Naive thymus-derived CD4-positive, alpha-beta T cell (primary cell): ENCODE measurements at regions of chr3 and their contacts with region 1.

Region 1: GRCh38 chr3:177057768-177058167 is 139.5 kb downstream of the TBL1XR1 start:
- DNase-seq: peak in 7 of 9 donors; percentile 16 to 40 (median 22)
- ATAC-seq: peak; percentile 84
- H3K4me3 ChIP-seq: peak overlapping the region; percentile 23
- H3K4me3 Mint-ChIP-seq: no peak overlapping the region
- H3K27ac ChIP-seq: no peak overlapping the region
- H3K27ac Mint-ChIP-seq: no peak overlapping the region
- H3K4me1 ChIP-seq: peaks cover 10 to 20% of the 10 kb centered on the region in 2 donors
- H3K4me1 Mint-ChIP-seq: peaks cover 5 to 43% (median 31%) of the 10 kb centered on the region in 7 donors
- H3K27me3 ChIP-seq: no peaks in the 10 kb centered on the region
- H3K27me3 Mint-ChIP-seq: no peaks in the 10 kb centered on the region

Region 2: DNA sequence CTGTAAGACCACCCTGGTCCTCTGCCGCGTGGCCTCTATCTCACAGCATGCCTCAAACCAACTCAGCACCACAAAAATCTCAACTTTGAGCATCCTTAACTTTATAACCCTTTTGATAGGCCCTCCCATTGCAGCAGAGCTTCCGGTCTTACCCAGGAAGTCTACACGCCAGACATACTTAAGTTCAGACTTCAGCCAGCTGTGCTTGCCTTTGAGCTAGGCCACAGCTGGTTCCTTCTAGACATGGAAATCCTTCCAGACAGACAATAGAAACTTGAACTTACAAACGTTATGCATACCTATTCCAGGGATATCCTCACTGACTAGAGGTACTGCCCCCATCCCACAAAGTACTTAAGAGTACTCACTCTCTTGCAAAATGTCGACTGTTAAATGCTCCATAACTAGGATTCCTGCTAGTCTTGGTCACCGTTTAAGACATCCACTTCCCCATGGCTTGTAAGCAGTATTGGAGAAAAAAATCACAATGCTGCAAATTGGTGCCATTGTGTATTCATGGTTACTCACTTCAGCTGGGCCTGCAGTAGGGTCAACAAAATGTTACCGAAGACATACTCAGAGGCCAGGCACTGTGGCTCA is 44.0 kb before region 1 on chr3:
- CTCF ChIA-PET with region 1: no interaction called
- POLR2A ChIA-PET with region 1: no interaction called
- intact Hi-C with region 1: no loop called
- DNase-seq: no peak
- ATAC-seq: no peak
- H3K4me3 ChIP-seq: no peak overlapping the region
- H3K4me3 Mint-ChIP-seq: no peak overlapping the region
- H3K27ac ChIP-seq: no peak overlapping the region
- H3K27ac Mint-ChIP-seq: peak overlapping the region in 1 of 9 donors; percentile 51
- H3K4me1 ChIP-seq: no peaks in the 10 kb centered on the region
- H3K4me1 Mint-ChIP-seq: no peaks in the 10 kb centered on the region
- H3K27me3 ChIP-seq: no peaks in the 10 kb centered on the region
- H3K27me3 Mint-ChIP-seq: no peaks in the 10 kb centered on the region

Region 3: DNA sequence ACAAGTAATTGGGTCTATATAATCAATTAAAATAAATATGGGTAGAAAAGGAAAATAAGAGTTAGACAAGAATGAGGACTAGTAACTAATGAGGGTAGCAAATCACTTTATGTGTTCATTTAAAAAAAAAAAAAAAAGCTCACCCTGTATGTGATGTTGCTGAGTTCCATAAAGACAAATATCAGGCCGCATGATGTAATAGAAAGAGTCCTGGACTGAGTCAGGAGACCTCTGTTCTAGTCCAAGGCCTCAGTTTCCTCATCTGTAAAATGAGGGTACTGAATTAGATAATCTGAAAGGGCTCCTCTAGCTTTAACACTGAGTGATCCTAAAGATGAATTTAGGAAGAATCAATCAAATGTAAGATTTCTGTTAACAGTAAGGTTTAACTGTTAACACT is 21.9 kb after region 1 on chr3:
- CTCF ChIA-PET with region 1: no interaction called
- POLR2A ChIA-PET with region 1: no interaction called
- intact Hi-C with region 1: loop called in 1 of 2 experiments (anchors 2 kb)
- DNase-seq: no peak
- ATAC-seq: no peak
- H3K4me3 ChIP-seq: no peak overlapping the region
- H3K4me3 Mint-ChIP-seq: no peak overlapping the region
- H3K27ac ChIP-seq: no peak overlapping the region
- H3K27ac Mint-ChIP-seq: peak overlapping the region in 1 of 9 donors; percentile 42
- H3K4me1 ChIP-seq: peaks cover 0 to 3% of the 10 kb centered on the region in 2 donors
- H3K4me1 Mint-ChIP-seq: peaks cover 14 to 70% (median 49%) of the 10 kb centered on the region in 7 donors
- H3K27me3 ChIP-seq: no peaks in the 10 kb centered on the region
- H3K27me3 Mint-ChIP-seq: no peaks in the 10 kb centered on the region

Region 4: GRCh38 chr3:177109688-177110330 is 52.0 kb after region 1 on chr3:
- CTCF ChIA-PET with region 1: no interaction called
- POLR2A ChIA-PET with region 1: interaction called, 4 read pairs
- intact Hi-C with region 1: loop called in 1 of 2 experiments (anchors 5 kb)
- DNase-seq: peak in 7 of 9 donors; percentile 17 to 70 (median 60)
- ATAC-seq: peak; percentile 92
- H3K4me3 ChIP-seq: no peak overlapping the region
- H3K4me3 Mint-ChIP-seq: peak overlapping the region; percentile 7 to 79 (median 60)
- H3K27ac ChIP-seq: peak overlapping the region; percentile 60
- H3K27ac Mint-ChIP-seq: peak overlapping the region in 8 of 9 donors; percentile 84 to 95 (median 89)
- H3K4me1 ChIP-seq: peaks cover 16 to 36% of the 10 kb centered on the region in 2 donors
- H3K4me1 Mint-ChIP-seq: peaks cover 47 to 89% (median 77%) of the 10 kb centered on the region in 7 donors
- H3K27me3 ChIP-seq: no peaks in the 10 kb centered on the region
- H3K27me3 Mint-ChIP-seq: no peaks in the 10 kb centered on the region

Region 5: GRCh38 chr3:177144923-177145780 is 87.4 kb after region 1 on chr3:
- CTCF ChIA-PET with region 1: no interaction called
- POLR2A ChIA-PET with region 1: interaction called, 4 read pairs
- intact Hi-C with region 1: loop called in 1 of 2 experiments (anchors 5 kb)
- DNase-seq: peak in 7 of 9 donors; percentile 25 to 67 (median 41)
- ATAC-seq: peak; percentile 91
- H3K4me3 ChIP-seq: peak overlapping the region; percentile 30
- H3K4me3 Mint-ChIP-seq: peak overlapping the region in 9 of 10 donors; percentile 51 to 74 (median 68)
- H3K27ac ChIP-seq: peak overlapping the region; percentile 47
- H3K27ac Mint-ChIP-seq: peak overlapping the region; percentile 64 to 94 (median 84)
- H3K4me1 ChIP-seq: peaks cover 39 to 40% of the 10 kb centered on the region in 2 donors
- H3K4me1 Mint-ChIP-seq: peaks cover 41 to 89% (median 71%) of the 10 kb centered on the region in 7 donors
- H3K27me3 ChIP-seq: no peaks in the 10 kb centered on the region
- H3K27me3 Mint-ChIP-seq: no peaks in the 10 kb centered on the region

Region 6: DNA sequence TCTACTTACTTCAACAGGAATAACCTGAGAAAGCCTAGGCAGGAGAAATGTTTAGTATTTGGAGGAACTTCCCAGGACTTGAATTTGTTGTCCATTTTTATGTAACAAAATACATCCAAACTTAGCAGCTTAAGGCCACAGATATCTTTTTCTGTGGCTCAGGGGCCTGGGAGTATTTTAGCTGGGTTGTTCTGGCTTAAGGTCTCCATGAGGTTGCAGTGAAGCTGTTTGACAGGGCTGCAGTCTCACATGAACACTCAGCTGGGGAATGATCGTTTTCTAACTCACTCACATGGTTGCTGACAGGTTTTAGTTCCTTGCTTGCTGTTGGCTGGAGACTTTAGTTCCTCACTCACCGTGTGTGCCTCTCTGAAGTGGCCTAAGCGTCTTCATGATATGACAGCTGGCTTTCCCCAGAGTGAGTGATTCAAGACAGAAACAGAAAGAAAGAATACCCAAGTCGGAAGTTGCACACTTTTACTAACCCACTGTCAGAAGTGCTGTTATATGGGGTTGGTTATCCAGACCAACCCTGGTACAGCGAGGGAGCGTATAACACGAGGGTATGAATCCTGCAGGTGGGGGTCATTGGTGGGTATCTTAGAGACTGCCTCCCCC is 369.2 kb after region 1 on chr3:
- CTCF ChIA-PET with region 1: no interaction called
- POLR2A ChIA-PET with region 1: no interaction called
- intact Hi-C with region 1: loop called in 1 of 2 experiments (anchors 5 kb)
- DNase-seq: peak in 6 of 9 donors; percentile 5 to 50 (median 19)
- ATAC-seq: peak; percentile 88
- H3K4me3 ChIP-seq: peak overlapping the region; percentile 7
- H3K4me3 Mint-ChIP-seq: peak overlapping the region; percentile 14 to 77 (median 47)
- H3K27ac ChIP-seq: no peak overlapping the region
- H3K27ac Mint-ChIP-seq: peak overlapping the region; percentile 3 to 85 (median 52)
- H3K4me1 ChIP-seq: peaks cover 7 to 17% of the 10 kb centered on the region in 2 donors
- H3K4me1 Mint-ChIP-seq: peaks cover 13 to 38% (median 23%) of the 10 kb centered on the region in 7 donors
- H3K27me3 ChIP-seq: no peaks in the 10 kb centered on the region
- H3K27me3 Mint-ChIP-seq: peaks cover 0 to 12% (median 0%) of the 10 kb centered on the region in 5 donors

Region 7: DNA sequence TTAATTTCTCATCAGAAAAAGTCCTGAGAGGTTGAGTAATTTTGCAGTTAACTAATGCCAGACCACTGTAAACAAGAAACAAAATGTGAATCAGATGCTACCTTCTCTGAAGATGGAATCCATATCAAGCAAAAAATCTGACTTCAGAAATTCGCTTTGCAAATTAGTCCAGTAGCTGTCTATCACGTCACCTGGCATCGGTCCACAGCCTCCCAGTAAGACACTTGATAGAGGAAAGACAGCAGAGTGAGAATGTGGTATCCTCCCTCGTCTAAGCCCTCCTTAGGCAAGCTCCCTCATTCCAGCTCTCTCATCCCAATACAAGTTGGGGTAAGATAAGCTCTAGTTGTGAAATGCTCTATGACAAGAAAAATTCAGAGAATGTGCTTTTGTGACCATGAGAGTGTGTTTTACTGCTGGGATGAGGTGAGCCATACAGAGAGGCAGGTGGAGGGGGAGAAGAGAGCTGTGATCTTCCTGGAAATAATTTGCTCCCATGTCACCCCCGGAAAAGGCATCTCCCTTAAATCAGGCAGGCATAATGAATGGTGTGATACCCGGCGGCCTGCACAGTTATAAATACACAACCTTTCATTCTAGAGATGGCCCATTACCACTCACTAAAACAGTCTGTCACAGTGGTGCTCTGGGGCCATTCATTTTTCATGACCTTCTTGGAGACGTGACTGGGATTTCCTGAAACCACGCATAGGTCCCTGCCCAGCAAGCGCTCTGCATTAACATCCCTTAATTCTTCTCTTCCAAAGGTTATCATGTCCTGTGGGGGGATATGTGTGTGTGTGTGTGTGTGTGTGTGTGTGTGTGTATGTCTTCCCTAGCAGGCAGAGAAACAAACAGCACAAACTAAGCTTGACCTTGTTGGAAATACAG is 876.5 kb after region 1 on chr3:
- CTCF ChIA-PET with region 1: no interaction called
- POLR2A ChIA-PET with region 1: no interaction called
- intact Hi-C with region 1: no loop called
- DNase-seq: no peak
- ATAC-seq: no peak
- H3K4me3 ChIP-seq: no peak overlapping the region
- H3K4me3 Mint-ChIP-seq: no peak overlapping the region
- H3K27ac ChIP-seq: no peak overlapping the region
- H3K27ac Mint-ChIP-seq: no peak overlapping the region
- H3K4me1 ChIP-seq: no peaks in the 10 kb centered on the region
- H3K4me1 Mint-ChIP-seq: no peaks in the 10 kb centered on the region
- H3K27me3 ChIP-seq: no peaks in the 10 kb centered on the region
- H3K27me3 Mint-ChIP-seq: no peaks in the 10 kb centered on the region